ENCODE measurements at regions of chr11 and their contacts with region 1.

Region 1: DNA sequence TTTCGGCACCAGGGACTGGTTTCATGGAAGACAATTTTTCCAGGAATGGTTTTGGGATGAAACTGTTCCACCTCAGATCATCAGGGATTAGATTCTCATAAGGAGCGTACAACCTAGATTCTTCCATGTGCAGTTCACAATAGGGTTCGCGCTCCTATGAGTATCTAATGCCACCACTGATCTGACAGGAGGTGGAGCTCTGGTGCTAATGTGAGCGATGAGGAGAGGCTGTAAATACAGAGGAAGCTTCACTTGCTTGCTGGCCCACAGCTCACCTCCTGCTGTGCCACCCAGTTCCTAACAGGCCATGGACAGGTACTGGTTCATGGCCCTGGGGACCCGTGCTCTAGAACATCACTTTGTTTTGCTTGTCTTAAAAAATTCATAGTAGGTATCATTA is 41.8 kb upstream of the AMPD3 start:
- DNase-seq: peak; percentile 71
- ATAC-seq: peak; percentile 81
- H3K4me3 Mint-ChIP-seq: no peak overlapping the region
- H3K27ac Mint-ChIP-seq: no peak overlapping the region
- H3K4me1 Mint-ChIP-seq: peaks cover 36% of the 10 kb centered on the region
- H3K27me3 Mint-ChIP-seq: peaks cover 7% of the 10 kb centered on the region

Region 2: GRCh38 chr11:10275714-10276113 is 137.6 kb before region 1 on chr11:
- CTCF ChIA-PET with region 1: no interaction called
- DNase-seq: no peak
- ATAC-seq: no peak
- H3K4me3 Mint-ChIP-seq: no peak overlapping the region
- H3K27ac Mint-ChIP-seq: no peak overlapping the region
- H3K4me1 Mint-ChIP-seq: peaks cover 2% of the 10 kb centered on the region
- H3K27me3 Mint-ChIP-seq: peaks cover 6% of the 10 kb centered on the region

Region 3: GRCh38 chr11:10455637-10456487 is 42.6 kb after region 1 on chr11:
- CTCF ChIA-PET with region 1: interaction called, 17 read pairs
- DNase-seq: peak; percentile 89
- ATAC-seq: peak; percentile 83
- H3K4me3 Mint-ChIP-seq: peak overlapping the region; percentile 93
- H3K27ac Mint-ChIP-seq: peak overlapping the region; percentile 87
- H3K4me1 Mint-ChIP-seq: peaks cover 68% of the 10 kb centered on the region
- H3K27me3 Mint-ChIP-seq: peaks cover 11% of the 10 kb centered on the region

Region 4: GRCh38 chr11:10646482-10647355 is 233.5 kb after region 1 on chr11:
- CTCF ChIA-PET with region 1: interaction called, 111 read pairs
- DNase-seq: no peak
- ATAC-seq: no peak
- H3K4me3 Mint-ChIP-seq: no peak overlapping the region
- H3K27ac Mint-ChIP-seq: no peak overlapping the region
- H3K4me1 Mint-ChIP-seq: peaks cover 9% of the 10 kb centered on the region
- H3K27me3 Mint-ChIP-seq: no peaks in the 10 kb centered on the region

Region 5: DNA sequence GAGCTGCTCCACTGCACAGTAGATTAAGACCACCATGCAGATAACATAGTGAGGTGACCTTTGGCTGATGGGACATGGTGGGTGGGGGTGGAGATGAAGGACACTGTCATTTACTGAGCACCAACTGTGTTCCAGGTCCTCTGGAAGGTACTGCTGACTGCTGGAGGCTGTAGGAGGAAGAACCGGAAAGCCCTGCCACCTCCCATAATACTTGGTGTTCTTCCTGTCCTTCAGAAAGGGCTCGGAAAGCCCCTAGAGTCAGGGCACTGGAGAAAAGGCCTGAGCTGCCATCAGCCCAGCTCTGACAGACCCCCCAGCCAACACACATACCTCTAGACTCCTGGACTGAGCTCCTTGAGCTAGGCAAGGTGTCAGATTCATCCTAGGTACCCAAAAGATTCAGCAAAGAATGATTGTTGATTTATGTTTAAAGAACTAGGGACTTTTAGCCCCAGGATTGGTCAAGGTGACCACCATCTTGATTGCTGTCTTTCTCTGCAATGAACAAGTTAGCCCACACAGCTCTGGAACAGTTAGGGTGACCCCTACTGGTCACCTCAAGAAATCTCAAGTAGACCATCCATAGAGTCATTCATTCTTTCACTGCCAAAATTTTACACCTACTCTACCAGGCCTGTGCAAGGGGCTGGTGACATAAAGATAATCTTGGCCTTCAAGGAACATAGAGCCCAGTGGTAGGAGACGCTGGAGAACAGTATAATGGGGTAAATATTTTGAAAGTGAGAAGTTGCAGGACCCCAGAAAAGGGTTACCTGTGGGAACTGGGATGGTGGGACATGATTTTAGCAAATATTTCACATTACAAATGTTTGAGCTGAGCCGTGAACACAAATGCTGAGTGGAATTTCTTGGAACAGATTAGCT is 240.9 kb after region 1 on chr11:
- CTCF ChIA-PET with region 1: interaction called, 111 read pairs
- DNase-seq: peak; percentile 48
- ATAC-seq: peak; percentile 77
- H3K4me3 Mint-ChIP-seq: no peak overlapping the region
- H3K27ac Mint-ChIP-seq: no peak overlapping the region
- H3K4me1 Mint-ChIP-seq: peaks cover 37% of the 10 kb centered on the region
- H3K27me3 Mint-ChIP-seq: no peaks in the 10 kb centered on the region

Region 6: GRCh38 chr11:10735481-10736475 is 322.5 kb after region 1 on chr11:
- CTCF ChIA-PET with region 1: interaction called, 60 read pairs
- DNase-seq: peak; percentile 92
- ATAC-seq: peak; percentile 100
- H3K4me3 Mint-ChIP-seq: peak overlapping the region; percentile 20
- H3K27ac Mint-ChIP-seq: no peak overlapping the region
- H3K4me1 Mint-ChIP-seq: peaks cover 9% of the 10 kb centered on the region
- H3K27me3 Mint-ChIP-seq: peaks cover 7% of the 10 kb centered on the region